ENCODE measurements at regions of chr22 and their contacts with region 1.

Region 1: DNA sequence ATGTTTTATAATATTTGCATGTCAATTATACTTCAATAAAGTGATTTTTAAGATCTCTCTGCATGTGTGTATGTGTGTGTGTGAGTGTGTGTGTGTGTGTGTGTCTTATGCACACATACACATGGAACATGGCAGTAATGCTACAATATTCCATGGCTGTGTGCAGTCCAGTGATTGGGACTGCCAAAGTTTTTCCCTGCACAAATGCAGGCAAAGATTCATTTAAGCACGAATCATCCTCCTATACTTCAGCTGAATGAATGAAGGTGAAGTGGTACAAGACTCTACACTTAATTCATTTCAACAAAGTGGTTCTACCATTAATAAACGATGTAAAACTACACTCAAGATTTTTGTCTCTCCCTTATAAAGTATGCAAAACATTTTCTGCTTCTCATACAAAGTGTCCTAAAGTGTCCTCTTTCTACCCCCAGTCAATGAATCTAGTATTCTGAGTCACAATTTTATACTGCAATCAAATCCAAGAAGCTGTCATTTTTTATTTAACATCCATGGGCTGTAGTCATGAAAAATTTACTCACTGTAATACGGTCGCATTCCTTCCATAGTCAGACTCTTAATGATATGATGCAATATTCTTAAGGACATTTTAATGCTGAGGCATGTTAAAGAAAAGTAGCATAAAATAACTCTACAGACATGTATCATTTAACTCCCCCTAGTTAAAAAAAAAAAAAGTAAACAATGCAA is 132.4 kb downstream of the TTC28 start:
- DNase-seq: no peak
- ATAC-seq: no peak
- H3K4me3 ChIP-seq: no peak overlapping the region
- H3K27ac ChIP-seq: no peak overlapping the region
- H3K4me1 ChIP-seq: no peaks in the 10 kb centered on the region; the same call in 1 of the 2 replicates
- H3K27me3 ChIP-seq: no peaks in the 10 kb centered on the region
- CTCF ChIP-seq: no peak

Region 2: GRCh38 chr22:28505416-28506149 is 41.7 kb before region 1 on chr22:
- CTCF ChIA-PET with region 1: no interaction called
- POLR2A ChIA-PET with region 1: no interaction called
- in situ Hi-C with region 1: no loop called
- intact Hi-C with region 1: loop called (anchors 5 kb)
- DNase-seq: no peak
- ATAC-seq: no peak
- H3K4me3 ChIP-seq: no peak overlapping the region
- H3K27ac ChIP-seq: no peak overlapping the region
- H3K4me1 ChIP-seq: no peaks in the 10 kb centered on the region
- H3K27me3 ChIP-seq: no peaks in the 10 kb centered on the region
- CTCF ChIP-seq: no peak

Region 3: DNA sequence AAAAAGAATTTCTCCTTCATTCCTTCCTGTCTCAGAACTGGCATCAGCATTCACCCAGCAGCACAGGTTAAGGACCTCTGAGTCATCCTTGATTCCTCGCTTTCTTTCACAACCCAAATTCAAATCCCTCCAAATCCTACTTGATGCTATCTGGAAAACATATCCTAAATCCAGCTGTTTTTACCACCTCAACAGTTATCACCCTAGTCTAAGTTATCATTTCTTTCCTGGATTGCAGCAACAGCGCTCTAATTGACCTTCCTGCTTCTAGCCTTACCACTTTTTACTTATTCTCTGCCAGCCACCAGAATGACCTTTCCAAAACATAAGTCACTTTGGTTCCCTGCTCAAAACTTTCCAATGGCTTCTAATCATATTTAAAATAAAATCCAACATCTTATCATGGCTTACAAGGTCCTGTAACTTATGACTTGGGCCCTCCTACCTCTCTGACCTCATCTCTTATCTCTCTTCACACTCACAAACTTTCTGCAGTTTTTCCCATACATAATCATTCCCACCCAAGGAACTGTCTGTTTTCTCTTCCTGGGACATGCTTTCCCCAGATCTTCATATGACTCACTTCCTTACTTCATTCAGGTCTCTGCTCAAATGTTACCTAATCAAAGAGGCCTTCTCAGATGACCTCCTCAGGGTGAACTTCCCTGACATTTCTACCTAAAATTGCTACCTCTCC is 12.9 kb after region 1 on chr22:
- CTCF ChIA-PET with region 1: no interaction called
- POLR2A ChIA-PET with region 1: interaction called, 10 read pairs
- in situ Hi-C with region 1: no loop called
- intact Hi-C with region 1: no loop called
- DNase-seq: no peak
- ATAC-seq: no peak
- H3K4me3 ChIP-seq: no peak overlapping the region
- H3K27ac ChIP-seq: no peak overlapping the region
- H3K4me1 ChIP-seq: no peaks in the 10 kb centered on the region; the same call in 1 of the 2 replicates
- H3K27me3 ChIP-seq: no peaks in the 10 kb centered on the region
- CTCF ChIP-seq: no peak

Measured in Panc1 (cell line).